ENCODE measurements at regions of chr18 and their contacts with region 1.

Region 1: DNA sequence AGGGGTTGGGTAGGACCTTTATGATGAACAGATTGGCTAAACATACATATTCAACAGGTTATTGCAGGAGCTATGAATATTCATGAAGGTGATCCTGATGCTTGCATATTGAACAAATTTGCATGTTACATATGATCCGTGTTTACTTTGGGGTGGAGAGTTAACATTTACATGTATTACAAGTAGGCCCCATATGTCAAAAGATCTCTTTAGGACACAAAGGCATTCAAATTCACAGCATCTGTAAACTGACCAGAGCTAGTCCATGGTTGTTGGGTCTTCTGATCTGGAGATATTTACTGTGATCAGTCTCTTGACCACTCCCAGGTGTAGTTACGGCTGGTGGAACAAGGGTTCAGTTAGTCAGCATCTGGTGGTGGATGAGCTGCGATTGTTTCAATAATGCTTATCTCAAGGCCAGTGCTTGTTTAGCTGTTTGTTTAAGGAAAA is 80.4 kb downstream of the PMAIP1 start:
- DNase-seq: no peak
- H3K4me3 ChIP-seq: no peak overlapping the region
- CTCF ChIP-seq: no peak

Region 2: GRCh38 chr18:59837586-59837985 is 142.6 kb before region 1 on chr18:
- CTCF ChIA-PET with region 1: interaction called, 13 read pairs
- POLR2A ChIA-PET with region 1: no interaction called
- DNase-seq: no peak
- H3K4me3 ChIP-seq: no peak overlapping the region
- CTCF ChIP-seq: peak; percentile 79

Region 3: DNA sequence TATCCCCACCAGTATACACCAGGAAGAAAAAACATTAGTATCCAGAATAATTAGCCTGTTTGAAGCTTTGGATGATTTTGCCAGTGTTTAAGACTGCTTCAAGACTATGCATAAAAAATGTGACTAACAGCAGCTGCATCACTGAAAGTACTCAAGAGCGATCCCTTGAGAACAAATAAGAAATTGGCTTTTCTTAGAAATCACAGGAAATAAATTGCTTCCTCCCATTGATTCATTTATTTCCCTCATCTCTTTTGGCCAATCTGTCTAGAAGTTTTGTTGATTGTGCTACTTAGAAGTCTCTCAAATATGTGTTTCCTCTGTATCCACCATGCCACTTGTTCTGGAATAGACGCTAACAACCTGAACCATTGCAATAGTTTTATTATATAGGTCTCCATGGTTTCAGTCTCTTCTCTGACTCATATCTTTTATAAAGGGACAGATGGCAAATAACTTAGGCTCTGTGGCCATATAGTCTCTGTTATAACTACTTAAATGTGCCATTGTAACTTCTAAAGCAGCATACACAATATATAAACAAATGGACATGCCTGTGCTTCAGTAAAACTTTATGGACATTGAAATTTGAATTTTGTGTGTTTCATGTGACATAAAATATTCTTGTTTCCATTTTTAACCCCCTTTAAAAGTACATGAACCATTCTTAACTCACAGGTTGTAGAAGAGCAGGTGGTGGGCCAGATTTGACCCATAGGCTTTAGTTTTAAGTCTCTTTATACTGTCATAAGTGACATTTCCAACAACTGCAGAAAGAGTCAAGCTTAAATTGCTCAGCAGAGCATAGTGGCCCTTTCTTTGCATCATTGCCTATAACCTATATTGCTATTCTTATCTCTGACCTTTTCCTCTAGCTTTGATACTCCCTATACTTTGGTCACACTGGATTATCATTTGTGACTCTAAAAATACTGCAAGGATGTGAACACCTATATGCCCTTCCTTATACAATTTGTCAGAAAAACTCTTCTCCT is 268.4 kb after region 1 on chr18:
- CTCF ChIA-PET with region 1: no interaction called
- POLR2A ChIA-PET with region 1: no interaction called
- DNase-seq: no peak
- H3K4me3 ChIP-seq: no peak overlapping the region
- CTCF ChIP-seq: no peak